AG04449 (cell line): ENCODE measurements at regions of chr14 and their contacts with region 1.

Region 1: GRCh38 chr14:24332268-24332993 is 2.4 kb downstream of the ADCY4 start:
- DNase-seq: no peak
- H3K4me3 ChIP-seq: no peak overlapping the region; the same call in 1 of the 2 replicates
- CTCF ChIP-seq: peak; percentile 77

Region 2: DNA sequence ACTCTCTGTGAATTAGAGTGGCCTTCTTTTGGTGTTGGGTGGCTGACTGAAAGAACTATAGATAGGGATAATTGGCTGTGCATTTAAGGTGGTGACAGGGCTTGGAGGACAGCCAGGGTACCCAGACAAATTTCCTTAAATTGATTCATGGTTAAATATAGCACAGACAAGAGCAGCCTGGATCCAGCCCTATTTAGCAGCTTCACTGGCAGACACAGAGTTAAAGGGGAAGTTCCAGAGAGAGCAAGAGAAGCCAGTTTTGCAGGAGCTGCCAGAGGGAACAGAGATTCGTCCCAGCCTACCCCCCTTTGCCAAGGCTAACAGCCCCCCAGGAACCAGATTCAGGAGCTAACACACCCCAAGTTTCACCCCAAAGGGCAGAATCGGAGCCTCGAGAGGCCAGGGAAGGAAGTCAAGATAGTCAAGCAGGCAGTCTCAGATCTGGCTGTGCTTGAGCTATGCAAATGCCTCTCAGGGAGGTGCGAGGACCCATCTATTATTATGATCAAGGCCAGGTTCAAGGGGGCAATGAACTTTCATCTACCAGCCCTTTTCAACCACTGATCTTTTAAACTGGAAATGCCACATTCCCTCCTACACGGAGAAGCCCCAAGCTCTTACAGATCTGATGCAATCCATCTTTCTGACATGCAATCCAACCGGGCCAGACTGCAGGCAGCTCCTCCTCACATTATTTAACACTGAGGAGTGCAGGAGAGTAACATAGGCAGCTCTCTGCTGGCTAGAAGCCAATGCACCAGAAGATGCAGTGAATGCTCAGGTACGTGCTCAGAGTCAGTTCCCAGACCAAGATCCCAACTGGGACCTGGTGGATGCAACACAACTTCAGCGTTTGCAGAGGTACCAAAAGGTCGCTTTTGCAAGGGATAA is 638.1 kb before region 1 on chr14:
- CTCF ChIA-PET with region 1: no interaction called
- POLR2A ChIA-PET with region 1: no interaction called
- DNase-seq: no peak
- H3K4me3 ChIP-seq: no peak overlapping the region
- CTCF ChIP-seq: no peak

Region 3: DNA sequence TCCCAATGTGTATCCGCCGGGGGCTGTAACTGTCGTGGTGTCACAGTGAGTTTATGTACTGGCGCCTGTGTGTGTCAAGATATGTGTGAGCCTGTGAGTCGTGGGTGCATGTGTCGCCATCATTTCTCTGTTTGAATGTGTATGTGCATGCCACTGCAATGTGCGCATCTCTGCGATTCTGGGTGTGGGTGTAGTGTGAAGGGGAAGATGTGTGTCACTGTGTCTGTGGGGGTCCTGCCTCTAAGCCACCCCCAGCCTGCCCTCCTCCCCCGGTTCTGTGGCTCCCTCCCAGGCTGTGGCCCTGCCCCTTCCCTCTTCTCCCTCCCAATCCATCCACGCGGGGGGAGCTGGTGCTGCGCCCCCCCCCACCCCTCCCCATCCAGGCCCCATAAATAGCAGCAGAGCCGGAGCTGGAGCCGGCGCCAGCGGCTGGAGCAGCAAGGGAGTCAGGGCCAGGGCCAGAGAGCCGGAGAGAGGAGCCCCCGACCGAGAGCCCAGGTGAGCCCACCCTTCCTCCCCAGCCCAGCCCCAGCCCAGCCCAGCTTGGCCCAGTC is 261.2 kb before region 1 on chr14 and contains the start of gene CPNE6:
- CTCF ChIA-PET with region 1: no interaction called
- POLR2A ChIA-PET with region 1: no interaction called
- DNase-seq: no peak
- H3K4me3 ChIP-seq: no peak within 1 kb of the TSS
- CTCF ChIP-seq: no peak

Region 4: GRCh38 chr14:24351517-24351916 is 19.1 kb after region 1 on chr14:
- CTCF ChIA-PET with region 1: interaction called, 101 read pairs
- POLR2A ChIA-PET with region 1: no interaction called
- DNase-seq: no peak
- H3K4me3 ChIP-seq: no peak overlapping the region
- CTCF ChIP-seq: no peak

Region 5: GRCh38 chr14:24372701-24373416 is 40.4 kb after region 1 on chr14:
- CTCF ChIA-PET with region 1: interaction called, 46 read pairs
- POLR2A ChIA-PET with region 1: no interaction called
- DNase-seq: no peak
- H3K4me3 ChIP-seq: no peak overlapping the region
- CTCF ChIP-seq: no peak

Region 6: GRCh38 chr14:24398653-24399446 is 66.4 kb after region 1 on chr14 and contains the start of gene NYNRIN:
- CTCF ChIA-PET with region 1: interaction called, 29 read pairs
- POLR2A ChIA-PET with region 1: no interaction called
- DNase-seq: no peak
- H3K4me3 ChIP-seq: peak within 1 kb of the TSS; percentile 69
- CTCF ChIP-seq: no peak